GM12878 (cell line): ENCODE measurements at regions of chr16 and their contacts with region 1.

Region 1: DNA sequence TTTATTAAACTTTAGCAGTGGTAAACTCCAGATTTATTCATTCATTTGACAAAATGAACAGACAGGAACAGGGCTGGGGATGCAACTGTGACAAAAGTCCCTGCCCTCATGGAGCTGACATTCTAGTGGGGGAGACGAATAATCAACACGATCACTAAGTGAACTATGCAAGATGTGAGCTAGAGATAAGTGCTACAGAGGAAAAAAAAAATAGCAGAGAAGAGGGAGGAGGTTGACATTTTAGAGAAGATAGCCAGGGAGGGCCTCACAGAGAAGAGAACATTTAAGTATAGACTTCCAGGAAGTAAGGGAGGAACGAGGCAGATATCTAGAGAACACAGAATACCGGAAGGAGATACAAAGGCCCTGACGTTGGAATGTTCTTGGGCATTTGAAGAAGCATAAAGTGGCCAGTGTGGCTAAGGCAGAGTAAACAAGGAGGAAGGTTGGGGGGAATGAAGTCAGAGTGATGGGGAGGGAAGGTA is 17.9 kb upstream of the AP1G1 start:
- DNase-seq: no peak
- ATAC-seq: no peak
- H3K4me3 ChIP-seq: no peak overlapping the region
- H3K27ac ChIP-seq: no peak overlapping the region
- H3K4me1 ChIP-seq: no peaks in the 10 kb centered on the region
- H3K27me3 ChIP-seq: no peaks in the 10 kb centered on the region
- CTCF ChIP-seq: no peak
- EP300 ChIP-seq: no peak
- POLR2A ChIP-seq: no peak
- RAD21 ChIP-seq: no peak

Region 2: DNA sequence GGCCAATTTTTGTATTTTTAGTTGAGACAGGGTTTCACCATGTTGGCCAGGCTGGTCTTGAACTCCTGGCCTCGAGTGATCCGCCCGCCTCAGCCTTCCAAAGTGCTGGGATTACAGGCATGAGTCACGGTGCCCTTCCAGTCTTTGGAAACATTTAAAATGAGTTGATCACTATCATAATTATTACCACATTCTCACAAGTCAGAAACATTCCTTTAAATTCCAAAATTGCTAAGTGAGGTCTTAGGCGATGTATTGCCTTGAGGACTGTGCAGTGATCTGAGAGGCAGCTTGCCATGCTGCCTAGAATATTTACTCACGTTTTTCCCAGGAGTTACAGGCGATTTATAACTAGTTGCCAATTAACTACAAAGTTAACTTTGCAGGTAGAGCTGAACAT is 13.4 kb after region 1 on chr16:
- CTCF ChIA-PET with region 1: interaction called, 6 read pairs
- POLR2A ChIA-PET with region 1: interaction called, 4 read pairs
- RAD21 ChIA-PET with region 1: interaction called, 5 read pairs
- SMC1A ChIA-PET with region 1: interaction called, 21 read pairs
- in situ Hi-C with region 1: no loop called
- intact Hi-C with region 1: no loop called
- DNase-seq: no peak
- ATAC-seq: no peak
- H3K4me3 ChIP-seq: no peak overlapping the region
- H3K27ac ChIP-seq: no peak overlapping the region
- H3K4me1 ChIP-seq: peaks cover 31% of the 10 kb centered on the region
- H3K27me3 ChIP-seq: no peaks in the 10 kb centered on the region
- CTCF ChIP-seq: no peak
- EP300 ChIP-seq: no peak
- POLR2A ChIP-seq: no peak
- RAD21 ChIP-seq: no peak